B cell (primary cell): ENCODE measurements at regions of chr5 and their contacts with region 1.

Region 1: DNA sequence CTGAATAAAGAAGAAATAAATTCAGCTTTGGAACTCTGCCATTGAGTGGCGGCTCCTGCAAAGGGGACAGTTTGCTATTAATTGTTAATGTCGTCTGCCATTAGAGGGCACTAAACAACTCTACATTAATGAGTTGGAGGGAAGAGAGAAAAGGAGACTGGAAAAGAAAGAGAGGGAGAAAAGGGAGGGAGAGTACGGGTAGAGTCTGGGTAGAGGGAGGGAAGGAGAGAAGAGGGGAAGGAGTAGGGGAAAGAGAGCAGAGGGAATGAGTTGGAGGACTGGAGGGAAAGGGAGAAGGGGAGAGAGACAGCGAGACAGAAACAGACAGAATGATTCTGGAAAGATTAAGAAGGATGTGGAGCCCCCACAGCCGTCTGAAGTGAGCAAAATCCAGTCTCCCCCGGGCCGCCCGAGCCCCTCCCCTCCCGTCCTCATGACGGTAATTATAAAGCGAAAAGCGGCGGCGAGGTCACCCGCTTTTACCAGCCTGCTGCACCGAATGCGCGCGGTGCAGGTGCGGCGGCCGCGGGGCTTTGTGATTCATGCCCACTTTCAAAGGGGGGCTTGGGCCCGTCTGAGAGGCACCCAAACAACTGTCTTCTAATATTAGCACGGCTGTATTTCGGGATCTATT is 1.9 kb upstream of the FST start:
- DNase-seq: peak; percentile 53
- ATAC-seq: no peak
- H3K4me3 ChIP-seq: peak overlapping the region in 4 of 5 experiments; percentile 4 to 66 (median 42)
- H3K4me3 Mint-ChIP-seq: peak overlapping the region; percentile 90
- H3K27ac ChIP-seq: no peak overlapping the region
- H3K27ac Mint-ChIP-seq: no peak overlapping the region
- H3K4me1 ChIP-seq: peaks cover 33 to 36% of the 10 kb centered on the region in 2 donors
- H3K4me1 Mint-ChIP-seq: peaks cover 39% of the 10 kb centered on the region
- H3K27me3 ChIP-seq: peaks cover 0 to 43% (median 28%) of the 10 kb centered on the region in 4 experiments
- H3K27me3 Mint-ChIP-seq: peaks cover 73% of the 10 kb centered on the region
- CTCF ChIP-seq: peak; percentile 65

Region 2: GRCh38 chr5:53362521-53362941 is 116.0 kb before region 1 on chr5:
- CTCF ChIA-PET with region 1: no interaction called
- POLR2A ChIA-PET with region 1: no interaction called
- intact Hi-C with region 1: no loop called
- DNase-seq: no peak
- ATAC-seq: no peak
- H3K4me3 ChIP-seq: no peak overlapping the region
- H3K4me3 Mint-ChIP-seq: no peak overlapping the region
- H3K27ac ChIP-seq: no peak overlapping the region
- H3K27ac Mint-ChIP-seq: no peak overlapping the region
- H3K4me1 ChIP-seq: no peaks in the 10 kb centered on the region
- H3K4me1 Mint-ChIP-seq: no peaks in the 10 kb centered on the region
- H3K27me3 ChIP-seq: no peaks in the 10 kb centered on the region
- H3K27me3 Mint-ChIP-seq: no peaks in the 10 kb centered on the region
- CTCF ChIP-seq: no peak

Region 3: DNA sequence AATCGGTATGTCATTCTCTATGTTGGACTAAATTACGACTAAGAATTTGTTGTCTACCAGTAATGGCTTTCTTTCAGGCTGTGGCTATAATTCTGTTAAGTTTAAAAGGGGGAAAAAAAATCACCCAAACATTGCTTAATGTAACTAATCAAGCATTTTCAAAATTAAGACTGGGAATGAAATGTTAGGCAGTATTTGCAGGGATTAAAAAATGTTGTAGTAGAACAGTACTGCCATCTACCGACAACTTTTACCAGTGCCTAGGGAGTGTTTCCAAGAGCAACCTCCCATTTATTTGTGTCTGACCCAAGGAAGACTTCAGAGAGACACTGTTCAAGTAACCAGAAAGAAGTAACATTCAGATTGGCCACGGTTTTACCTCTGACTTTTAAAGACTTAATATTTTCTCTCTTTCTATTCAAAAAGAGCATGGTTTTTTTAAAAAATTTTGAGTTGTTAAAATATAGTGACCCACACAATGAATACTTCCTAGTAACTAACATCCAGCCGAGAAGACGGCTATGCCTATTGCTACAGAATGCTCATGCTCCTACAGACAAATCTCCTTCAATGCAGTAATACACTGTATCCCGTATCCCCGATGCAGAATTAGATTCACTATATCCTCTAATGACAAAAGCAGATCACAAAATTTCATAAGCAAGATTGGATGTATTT is 739.4 kb after region 1 on chr5:
- CTCF ChIA-PET with region 1: interaction called, 5 read pairs
- POLR2A ChIA-PET with region 1: no interaction called
- intact Hi-C with region 1: loop called (anchors 1 kb)
- DNase-seq: peak; percentile 58
- ATAC-seq: no peak
- H3K4me3 ChIP-seq: no peak overlapping the region
- H3K4me3 Mint-ChIP-seq: no peak overlapping the region
- H3K27ac ChIP-seq: no peak overlapping the region
- H3K27ac Mint-ChIP-seq: no peak overlapping the region
- H3K4me1 ChIP-seq: no peaks in the 10 kb centered on the region
- H3K4me1 Mint-ChIP-seq: no peaks in the 10 kb centered on the region
- H3K27me3 ChIP-seq: no peaks in the 10 kb centered on the region
- H3K27me3 Mint-ChIP-seq: no peaks in the 10 kb centered on the region
- CTCF ChIP-seq: peak; percentile 74

Region 4: DNA sequence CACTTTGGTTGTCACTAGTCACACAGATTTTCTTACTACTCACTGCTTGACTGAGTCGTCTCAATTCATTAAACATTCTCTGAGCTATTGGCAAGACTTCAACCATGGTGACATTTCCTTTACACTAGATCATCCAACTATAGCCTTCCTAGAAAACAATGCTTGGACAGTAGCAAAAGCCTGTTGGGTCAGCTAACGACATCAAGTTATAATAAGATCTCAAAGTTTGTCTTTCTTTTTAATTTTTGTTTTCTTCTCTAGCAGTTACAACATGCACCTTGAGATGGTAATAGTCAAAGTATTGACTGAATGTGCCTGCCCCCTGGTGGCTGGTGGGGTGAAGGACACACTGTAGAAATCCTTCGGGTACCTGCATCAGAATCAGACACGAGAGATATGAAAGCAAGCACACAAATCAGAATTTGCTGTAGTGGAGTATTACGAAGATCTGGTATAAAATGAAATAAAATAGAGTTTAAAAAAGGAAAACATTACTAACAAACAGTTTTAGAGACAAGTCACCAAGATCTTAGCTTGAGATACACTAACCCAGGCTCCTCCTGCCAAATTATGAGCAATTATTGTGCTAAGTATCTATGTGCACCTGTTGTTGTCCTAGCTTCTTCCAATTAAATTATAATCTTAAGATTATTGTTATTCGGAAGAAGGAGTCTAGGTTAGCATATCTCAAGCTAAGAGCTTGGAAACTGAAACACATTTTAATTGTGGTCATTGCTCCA is 750.7 kb after region 1 on chr5:
- CTCF ChIA-PET with region 1: interaction called, 5 read pairs
- POLR2A ChIA-PET with region 1: no interaction called
- intact Hi-C with region 1: loop called (anchors 1 kb)
- DNase-seq: peak; percentile 66
- ATAC-seq: peak; percentile 73
- H3K4me3 ChIP-seq: no peak overlapping the region
- H3K4me3 Mint-ChIP-seq: no peak overlapping the region
- H3K27ac ChIP-seq: no peak overlapping the region
- H3K27ac Mint-ChIP-seq: no peak overlapping the region
- H3K4me1 ChIP-seq: peaks cover 5 to 8% of the 10 kb centered on the region in 2 donors
- H3K4me1 Mint-ChIP-seq: peaks cover 32% of the 10 kb centered on the region
- H3K27me3 ChIP-seq: no peaks in the 10 kb centered on the region
- H3K27me3 Mint-ChIP-seq: no peaks in the 10 kb centered on the region
- CTCF ChIP-seq: peak; percentile 97

Region 5: DNA sequence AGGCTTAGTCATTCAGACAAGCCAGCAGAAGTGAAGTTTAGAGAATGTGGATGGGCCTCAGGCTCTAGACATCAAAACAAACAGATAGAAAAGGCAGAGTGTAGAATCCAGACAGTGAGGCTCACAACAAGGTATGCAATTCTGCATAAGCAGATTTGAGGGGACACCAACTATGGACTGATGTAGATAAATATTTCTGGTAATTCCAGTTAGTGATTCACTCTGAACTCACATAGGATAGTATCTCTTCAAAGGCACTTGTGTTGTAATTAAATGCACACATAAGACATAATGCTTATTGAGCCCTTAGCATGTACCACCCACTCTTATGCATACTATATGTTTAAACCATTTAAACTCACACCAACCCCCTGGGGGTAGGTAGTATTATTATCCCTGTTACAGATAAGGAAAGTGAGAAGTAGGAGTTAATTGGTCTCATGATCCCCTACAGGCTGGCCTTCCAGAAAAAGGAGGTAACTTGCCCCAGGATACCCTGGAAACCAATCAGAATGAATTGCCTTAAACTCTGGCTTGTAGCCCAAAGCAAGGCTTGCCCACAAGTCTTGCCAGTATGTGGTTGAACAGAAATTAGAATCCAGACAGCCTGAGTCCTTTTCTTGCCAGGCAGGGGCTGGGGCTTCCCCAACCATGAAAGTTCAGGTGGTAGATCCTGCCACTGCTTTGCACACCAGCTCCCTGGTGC is 937.5 kb after region 1 on chr5:
- CTCF ChIA-PET with region 1: no interaction called
- POLR2A ChIA-PET with region 1: no interaction called
- intact Hi-C with region 1: loop called (anchors 5 kb)
- DNase-seq: no peak
- ATAC-seq: no peak
- H3K4me3 ChIP-seq: no peak overlapping the region
- H3K4me3 Mint-ChIP-seq: no peak overlapping the region
- H3K27ac ChIP-seq: no peak overlapping the region
- H3K27ac Mint-ChIP-seq: no peak overlapping the region
- H3K4me1 ChIP-seq: no peaks in the 10 kb centered on the region
- H3K4me1 Mint-ChIP-seq: no peaks in the 10 kb centered on the region
- H3K27me3 ChIP-seq: peaks cover 0 to 4% (median 0%) of the 10 kb centered on the region in 4 experiments
- H3K27me3 Mint-ChIP-seq: peaks cover 27% of the 10 kb centered on the region
- CTCF ChIP-seq: no peak